Vagina (tissue), 2 donors: ENCODE measurements at regions of chr18 and their contacts with region 1.

Region 1: GRCh38 chr18:21433436-21433835 is 167.1 kb downstream of the ESCO1 start:
- DNase-seq: no peak
- H3K4me3 ChIP-seq: no peak overlapping the region
- H3K27ac ChIP-seq: no peak overlapping the region
- H3K4me1 ChIP-seq: no peaks in the 10 kb centered on the region
- H3K27me3 ChIP-seq: no peaks in the 10 kb centered on the region
- CTCF ChIP-seq: no peak
- POLR2A ChIP-seq: no peak

Region 2: GRCh38 chr18:21203096-21203495 is 230.3 kb before region 1 on chr18:
- intact Hi-C with region 1: loop called (anchors 10 kb)
- DNase-seq: no peak
- H3K4me3 ChIP-seq: no peak overlapping the region
- H3K27ac ChIP-seq: no peak overlapping the region
- H3K4me1 ChIP-seq: no peaks in the 10 kb centered on the region
- H3K27me3 ChIP-seq: no peaks in the 10 kb centered on the region
- CTCF ChIP-seq: no peak
- POLR2A ChIP-seq: no peak

Region 3: DNA sequence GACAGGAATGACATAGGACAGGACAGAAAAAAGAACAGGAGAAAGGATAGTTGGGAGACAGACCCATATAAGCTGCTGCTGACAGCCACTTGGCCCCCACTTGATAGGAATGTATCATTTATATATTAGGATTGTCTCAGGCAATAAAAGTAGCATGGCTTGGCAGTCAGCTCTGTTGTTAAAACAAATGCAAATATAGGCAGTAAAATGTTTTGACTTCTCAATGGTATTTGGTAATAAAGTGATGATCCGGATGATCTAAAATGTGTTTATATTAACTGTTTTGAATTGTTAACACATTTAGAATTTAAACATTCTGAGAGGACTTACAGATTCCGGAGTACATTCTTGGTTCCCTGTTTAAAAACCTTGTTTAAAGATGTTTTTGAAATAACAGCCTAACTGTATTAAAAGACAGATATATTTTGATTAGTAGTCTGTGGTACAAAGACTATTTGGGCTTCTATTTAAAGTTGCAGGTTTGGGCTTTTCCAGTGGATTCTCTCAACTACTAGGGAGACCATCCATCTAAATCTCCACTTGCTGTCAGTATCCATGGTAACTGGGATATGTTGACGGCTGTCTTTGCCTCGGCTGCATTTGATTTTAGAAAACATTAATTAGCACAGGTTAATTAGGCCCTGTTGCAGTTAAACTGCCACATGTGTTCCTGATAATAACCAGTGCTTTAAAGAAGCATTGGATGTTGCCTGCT is 19.5 kb after region 1 on chr18:
- intact Hi-C with region 1: no loop called
- DNase-seq: no peak
- H3K4me3 ChIP-seq: no peak overlapping the region
- H3K27ac ChIP-seq: no peak overlapping the region
- H3K4me1 ChIP-seq: peaks cover 18% of the 10 kb centered on the region
- H3K27me3 ChIP-seq: no peaks in the 10 kb centered on the region
- CTCF ChIP-seq: no peak
- POLR2A ChIP-seq: no peak

Region 4: DNA sequence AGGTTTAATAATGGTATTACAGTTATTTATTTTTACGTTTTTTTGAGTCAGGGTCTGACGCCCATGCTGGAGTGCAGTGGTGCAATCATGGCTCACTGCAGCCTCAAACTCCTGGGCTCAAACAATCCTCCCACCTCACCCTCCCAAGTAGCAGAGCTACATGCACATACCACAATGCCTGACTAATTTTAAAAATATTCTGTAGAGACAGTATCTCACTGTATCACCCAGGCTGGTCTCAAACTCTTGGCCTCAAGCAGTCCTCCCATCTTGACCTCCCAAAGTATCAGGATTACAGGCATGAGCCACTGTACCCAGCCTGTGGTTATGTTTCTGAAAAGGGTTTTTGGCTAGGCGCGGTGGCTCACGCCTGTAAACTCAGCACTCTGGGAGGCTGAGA is 46.3 kb after region 1 on chr18:
- intact Hi-C with region 1: no loop called
- DNase-seq: no peak
- H3K4me3 ChIP-seq: no peak overlapping the region
- H3K27ac ChIP-seq: no peak overlapping the region
- H3K4me1 ChIP-seq: no peaks in the 10 kb centered on the region
- H3K27me3 ChIP-seq: no peaks in the 10 kb centered on the region
- CTCF ChIP-seq: no peak
- POLR2A ChIP-seq: no peak

Region 5: GRCh38 chr18:21704603-21705364 is 271.3 kb after region 1 on chr18 and contains the start of gene ABHD3:
- intact Hi-C with region 1: no loop called
- DNase-seq: no peak
- H3K4me3 ChIP-seq: peak within 1 kb of the TSS; percentile 76 to 91
- H3K27ac ChIP-seq: peak within 1 kb of the TSS; percentile 96
- H3K4me1 ChIP-seq: peaks cover 17% of the 10 kb centered on the region
- H3K27me3 ChIP-seq: no peaks in the 10 kb centered on the region
- CTCF ChIP-seq: peak in 2 of 3 experiments; percentile 31 to 69
- POLR2A ChIP-seq: peak; percentile 90 to 93
- total RNA-seq, gene ABHD3: 21.1 TPM